AG04449 (cell line): ENCODE measurements at regions of chr6 and their contacts with region 1.

Region 1: DNA sequence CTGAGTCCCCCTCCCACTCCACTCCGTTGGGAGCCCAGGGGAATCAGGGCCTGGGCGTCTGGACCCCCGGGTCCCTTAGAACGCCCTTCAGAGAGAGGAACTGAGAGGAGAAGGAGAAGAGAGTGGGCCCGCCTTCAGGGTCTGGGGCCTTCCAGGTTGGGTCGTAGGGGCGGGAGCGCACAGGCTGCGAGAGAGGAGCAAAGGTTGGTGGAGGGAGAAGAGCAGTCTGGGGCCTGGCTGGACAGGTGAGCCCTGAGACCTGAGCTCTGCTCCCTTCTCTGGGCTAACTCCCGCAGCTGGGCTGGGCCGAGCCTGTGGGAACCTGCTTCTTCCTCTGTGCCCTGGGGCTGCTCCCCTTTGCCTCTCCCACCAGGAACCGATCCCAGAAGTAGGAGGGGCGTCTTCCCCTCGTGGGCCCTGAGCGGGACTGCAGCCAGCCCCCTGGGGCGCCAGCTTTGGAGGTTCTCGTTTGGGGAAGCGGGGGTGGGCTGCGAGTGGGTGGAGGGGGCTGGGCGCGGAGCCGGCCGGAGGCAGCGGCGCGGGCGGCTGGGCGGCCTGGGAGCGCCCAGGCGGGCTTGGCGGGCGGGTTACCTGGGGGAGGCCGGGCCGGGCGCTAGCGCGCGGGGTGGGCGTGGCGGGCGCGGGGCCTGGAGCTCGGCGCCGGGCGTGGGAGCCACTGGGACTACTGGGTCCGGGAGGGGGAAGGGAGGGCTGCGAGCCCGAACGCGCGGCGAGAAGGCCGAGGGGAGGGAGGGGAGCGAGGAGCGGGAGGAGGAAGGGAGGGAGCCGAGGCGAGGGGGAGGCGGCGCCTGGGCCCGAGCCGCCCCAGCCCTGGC is at the start of gene DDR1:
- DNase-seq: no peak
- H3K4me3 ChIP-seq: peak within 1 kb of the TSS; percentile 82
- CTCF ChIP-seq: no peak

Region 2: DNA sequence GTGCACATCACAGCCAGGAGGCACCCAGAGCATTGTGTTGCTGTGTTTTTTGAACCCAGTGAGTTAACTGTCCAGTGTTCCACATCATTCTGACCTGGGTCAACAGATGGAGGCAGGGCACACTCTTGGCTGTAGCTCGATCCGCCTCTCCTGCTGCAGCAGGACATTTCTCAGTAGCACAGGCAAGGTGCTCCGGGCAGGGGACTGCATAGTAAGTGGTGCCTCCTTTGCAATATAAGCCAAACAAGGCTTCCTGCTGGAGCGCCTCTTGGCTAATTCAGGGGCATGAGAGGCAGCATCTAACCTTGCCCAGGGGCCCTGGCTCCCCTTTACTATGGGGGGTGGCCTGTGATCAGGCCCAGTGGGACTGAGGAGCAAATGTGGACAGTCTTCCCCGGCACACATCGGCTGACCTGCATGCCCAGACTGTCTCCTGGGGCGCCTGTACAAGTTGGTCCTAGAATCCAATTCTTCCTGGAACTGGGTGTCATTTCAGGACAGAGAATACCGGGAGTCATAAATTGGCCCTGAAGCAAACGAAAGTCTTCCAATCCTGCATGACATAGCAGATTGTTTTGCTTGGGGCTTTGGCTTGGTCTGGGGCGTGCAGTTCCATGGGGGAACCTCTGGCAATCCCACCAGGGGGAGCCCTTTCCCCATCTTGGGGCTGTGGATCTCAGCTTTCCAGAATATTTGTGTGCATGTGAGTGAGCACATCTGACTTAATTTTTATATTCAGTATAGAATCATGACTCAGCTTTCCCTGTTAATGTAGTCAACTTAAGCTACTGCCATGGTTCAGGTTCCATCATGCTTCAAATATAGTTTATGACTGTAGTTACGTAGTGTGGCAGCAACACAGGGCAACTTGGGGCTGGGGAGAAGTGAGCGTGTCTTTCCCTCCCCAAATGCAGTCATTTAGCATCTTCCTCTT is 55.6 kb before region 1 on chr6:
- CTCF ChIA-PET with region 1: interaction called, 472 read pairs
- POLR2A ChIA-PET with region 1: no interaction called
- DNase-seq: peak; percentile 70
- H3K4me3 ChIP-seq: no peak overlapping the region
- CTCF ChIP-seq: peak; percentile 90

Region 3: DNA sequence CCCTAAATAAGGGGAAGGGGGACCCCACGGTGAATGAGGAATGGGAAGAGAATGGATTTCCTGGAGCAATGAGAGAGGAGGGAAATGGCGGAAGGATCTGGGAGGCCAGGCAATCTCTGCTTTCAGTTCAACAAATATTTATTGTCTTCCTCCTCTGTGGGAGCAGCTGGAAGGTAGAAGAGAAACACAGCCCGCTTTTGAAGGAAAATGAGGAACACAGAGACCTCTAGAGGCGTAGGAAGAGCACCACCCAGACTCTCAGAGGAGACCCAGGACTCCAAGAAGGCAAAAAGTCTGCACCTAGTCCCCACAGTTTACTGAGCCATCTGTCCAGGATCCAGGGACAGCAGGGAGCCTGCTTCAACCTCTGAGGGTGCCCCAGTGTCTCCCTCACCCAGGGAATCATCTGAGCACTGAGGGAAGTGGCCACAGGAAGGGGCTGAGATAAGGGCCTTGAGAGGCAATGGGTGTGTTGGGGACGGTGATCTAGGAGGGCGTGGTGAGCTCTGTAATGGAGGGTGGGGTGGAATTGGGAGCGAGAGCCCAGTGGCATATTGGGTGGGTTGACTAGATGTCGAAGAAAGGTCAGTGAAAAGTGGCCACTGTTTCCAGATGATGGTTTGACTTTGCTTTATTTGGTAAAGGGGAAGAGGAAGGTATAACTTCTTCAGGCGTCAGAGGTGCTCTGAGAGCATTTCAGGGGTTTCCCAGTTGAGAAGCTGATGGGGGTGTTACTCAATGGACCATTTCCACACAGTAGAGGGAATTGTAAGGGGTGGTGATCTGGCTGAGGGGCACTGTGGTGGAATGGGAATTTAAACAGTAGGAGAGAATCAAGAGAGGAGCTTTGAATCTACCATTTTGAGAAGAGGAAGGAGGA is 231.3 kb after region 1 on chr6:
- CTCF ChIA-PET with region 1: no interaction called
- POLR2A ChIA-PET with region 1: no interaction called
- DNase-seq: no peak
- H3K4me3 ChIP-seq: peak overlapping the region; percentile 25
- CTCF ChIP-seq: peak; percentile 35